Naive thymus-derived CD8-positive, alpha-beta T cell (primary cell): ENCODE measurements at regions of chr19 and their contacts with region 1.

Region 1: DNA sequence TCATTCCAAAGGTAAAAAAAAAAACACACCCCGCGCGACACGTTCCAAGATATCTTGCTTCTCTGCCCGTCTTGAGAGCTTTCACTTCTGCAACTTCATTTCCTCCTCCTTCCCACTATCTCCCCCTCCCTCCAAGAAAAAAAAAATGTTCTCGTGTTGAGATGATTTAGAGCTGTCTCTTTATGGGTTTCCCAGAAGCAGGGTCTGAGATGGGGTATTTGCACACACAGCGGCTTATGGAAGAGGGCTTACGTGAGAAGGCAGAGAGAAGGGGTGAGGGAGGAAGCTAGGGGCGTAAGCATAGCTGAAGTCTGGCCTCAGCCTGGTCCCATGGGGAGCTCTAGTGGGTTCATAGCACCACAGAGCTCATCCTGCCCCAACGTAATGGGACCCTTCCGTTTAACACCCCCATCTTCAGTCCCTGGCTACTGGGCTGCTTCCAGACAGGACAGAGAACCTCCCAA is 31.3 kb upstream of the USE1 start:
- DNase-seq: peak in 3 of 10 donors; percentile 33 to 44 (median 39)
- ATAC-seq: peak; percentile 69 to 75
- H3K4me3 Mint-ChIP-seq: peak overlapping the region; percentile 83 to 92 (median 88)
- H3K27ac Mint-ChIP-seq: peak overlapping the region; percentile 86 to 98 (median 96)
- H3K4me1 Mint-ChIP-seq: peaks cover 11 to 39% (median 29%) of the 10 kb centered on the region in 4 donors
- H3K27me3 Mint-ChIP-seq: no peaks in the 10 kb centered on the region

Region 2: GRCh38 chr19:15911599-15912235 is 1272.2 kb before region 1 on chr19:
- POLR2A ChIA-PET with region 1: no interaction called
- DNase-seq: no peak
- ATAC-seq: peak in 1 of 2 donors; percentile 39
- H3K4me3 Mint-ChIP-seq: peak overlapping the region in 5 of 10 donors; percentile 39 to 73 (median 55)
- H3K27ac Mint-ChIP-seq: no peak overlapping the region
- H3K4me1 Mint-ChIP-seq: peaks cover 0 to 12% (median 4%) of the 10 kb centered on the region in 4 donors
- H3K27me3 Mint-ChIP-seq: peaks cover 42 to 71% (median 60%) of the 10 kb centered on the region in 5 donors

Region 3: GRCh38 chr19:17075035-17075863 is 108.6 kb before region 1 on chr19 and contains the starts of genes HAUS8 and MYO9B:
- POLR2A ChIA-PET with region 1: interaction called, 13 read pairs
- DNase-seq: peak; percentile 98 to 100 (median 99)
- ATAC-seq: peak; percentile 89 to 96
- H3K4me3 Mint-ChIP-seq: peak within 1 kb of the TSS; percentile 91 to 99 (median 98)
- H3K27ac Mint-ChIP-seq: peak within 1 kb of the TSS; percentile 92 to 99 (median 97)
- H3K4me1 Mint-ChIP-seq: peaks cover 29 to 74% (median 66%) of the 10 kb centered on the region in 4 donors
- H3K27me3 Mint-ChIP-seq: no peaks in the 10 kb centered on the region
- polyA plus RNA-seq, gene HAUS8: 5.3 to 11.9 (median 5.9) TPM
- polyA plus RNA-seq, gene MYO9B: 3.3 to 22.3 (median 8.0) TPM

Region 4: DNA sequence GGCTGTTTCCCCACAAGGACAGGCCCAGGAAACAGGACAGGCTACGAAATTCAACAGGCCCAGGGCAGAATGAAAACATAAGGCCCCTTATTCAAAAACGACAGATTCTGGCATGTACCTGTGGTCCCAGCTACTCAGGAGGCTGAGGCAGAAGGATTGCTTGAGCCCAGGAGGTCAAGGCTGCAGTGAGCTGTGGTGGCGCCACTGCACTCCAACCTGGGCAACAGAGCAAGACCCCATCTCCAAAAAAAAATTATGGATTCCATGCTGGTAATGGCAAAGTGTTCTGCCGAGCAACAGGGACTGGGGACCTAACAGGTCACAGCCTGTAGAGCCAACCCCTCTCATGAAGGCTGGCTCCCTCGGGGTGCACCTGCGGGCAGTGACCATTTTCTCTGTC is 21.3 kb before region 1 on chr19:
- POLR2A ChIA-PET with region 1: interaction called, 10 read pairs
- DNase-seq: no peak
- ATAC-seq: no peak
- H3K4me3 Mint-ChIP-seq: no peak overlapping the region
- H3K27ac Mint-ChIP-seq: no peak overlapping the region
- H3K4me1 Mint-ChIP-seq: no peaks in the 10 kb centered on the region
- H3K27me3 Mint-ChIP-seq: no peaks in the 10 kb centered on the region

Region 5: DNA sequence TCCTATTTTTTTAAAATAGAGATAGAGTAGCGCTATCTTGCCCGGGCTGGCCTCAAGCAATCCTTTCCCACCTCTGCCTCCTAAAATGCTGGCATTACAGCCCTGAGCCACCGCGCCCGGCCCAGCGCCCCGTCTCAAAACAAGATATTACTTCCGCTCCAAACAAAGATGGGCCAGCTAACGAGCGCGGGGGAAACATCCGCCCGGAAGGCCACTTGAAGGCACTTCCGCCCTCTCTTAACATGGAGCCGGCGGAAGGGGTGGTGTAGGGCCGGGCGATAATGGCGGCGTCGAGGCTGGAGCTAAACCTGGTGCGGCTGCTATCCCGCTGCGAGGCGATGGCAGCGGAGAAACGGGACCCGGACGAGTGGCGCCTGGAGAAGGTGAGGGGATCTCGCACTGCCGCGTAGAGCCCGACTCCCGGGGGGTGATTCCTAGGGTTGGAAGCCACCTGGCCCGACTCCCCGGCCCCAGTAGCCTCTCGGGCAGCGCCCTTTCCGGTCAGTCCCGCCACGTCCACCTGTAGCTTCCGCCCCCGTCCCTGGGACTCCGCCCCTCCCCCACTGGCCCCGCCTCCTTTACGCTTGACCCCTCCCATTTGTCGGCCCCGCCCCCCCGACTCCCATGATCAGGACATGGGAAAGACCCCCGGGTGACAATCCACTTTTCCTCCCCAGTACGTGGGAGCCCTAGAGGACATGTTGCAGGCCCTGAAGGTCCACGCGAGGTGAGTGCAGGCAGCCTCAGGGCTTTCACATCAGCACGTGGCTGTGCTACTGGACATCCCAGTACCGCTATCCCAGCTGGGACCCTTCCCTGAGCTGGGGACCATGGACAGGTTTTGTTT is 31.5 kb after region 1 on chr19 and contains the start of gene USE1:
- POLR2A ChIA-PET with region 1: interaction called, 43 read pairs
- DNase-seq: peak; percentile 76 to 95 (median 86)
- ATAC-seq: peak; percentile 96 to 99
- H3K4me3 Mint-ChIP-seq: peak within 1 kb of the TSS; percentile 83 to 95 (median 90)
- H3K27ac Mint-ChIP-seq: peak within 1 kb of the TSS; percentile 94 to 100 (median 99)
- H3K4me1 Mint-ChIP-seq: peaks cover 2 to 21% (median 15%) of the 10 kb centered on the region in 4 donors
- H3K27me3 Mint-ChIP-seq: no peaks in the 10 kb centered on the region
- polyA plus RNA-seq, gene USE1: 50.4 to 69.0 (median 57.0) TPM

Region 6: DNA sequence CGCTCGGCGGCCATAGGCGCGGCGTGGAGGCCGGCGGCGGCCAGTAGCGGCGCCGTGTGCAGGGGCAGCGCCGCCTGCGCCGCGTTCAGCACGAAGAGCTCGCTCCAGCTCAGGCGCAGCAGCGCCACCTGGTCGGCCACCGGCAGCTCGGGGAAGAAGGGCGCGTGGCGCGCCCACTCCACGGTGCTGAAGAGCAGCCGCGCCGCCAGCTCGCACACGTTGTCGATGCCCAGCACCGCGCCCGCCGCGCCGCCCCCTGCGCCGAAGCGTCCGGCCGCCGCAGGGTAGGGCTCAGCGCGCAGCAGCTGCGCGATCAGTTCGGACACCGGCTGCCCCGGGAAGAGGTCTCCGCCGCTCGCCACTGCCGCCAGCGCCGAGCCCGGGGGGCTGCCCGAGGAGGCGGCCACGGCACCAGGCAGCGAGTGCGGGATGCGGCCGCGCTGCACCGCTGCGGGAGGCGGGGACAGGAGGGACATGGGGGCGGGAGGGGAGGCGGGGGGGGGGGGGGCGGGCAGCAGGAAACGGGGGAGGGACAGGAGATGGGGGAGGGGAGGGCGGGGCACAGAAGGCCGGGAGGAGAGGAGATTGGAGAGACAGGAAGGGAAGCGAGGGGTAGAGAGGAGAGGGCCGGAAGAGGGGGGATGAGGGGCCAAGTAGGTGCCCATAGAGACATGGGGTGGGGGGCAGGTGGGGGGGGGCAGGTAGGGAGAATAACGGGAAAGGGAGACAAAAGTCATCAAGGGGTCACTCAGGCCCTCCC is 51.9 kb after region 1 on chr19:
- POLR2A ChIA-PET with region 1: interaction called, 24 read pairs
- DNase-seq: peak; percentile 58 to 85 (median 72)
- ATAC-seq: peak; percentile 94 to 97
- H3K4me3 Mint-ChIP-seq: peak overlapping the region; percentile 29 to 88 (median 80)
- H3K27ac Mint-ChIP-seq: peak overlapping the region in 1 of 10 donors; percentile 36
- H3K4me1 Mint-ChIP-seq: peaks cover 9 to 15% (median 14%) of the 10 kb centered on the region in 4 donors
- H3K27me3 Mint-ChIP-seq: no peaks in the 10 kb centered on the region